ENCODE measurements at regions of chr2 and their contacts with region 1.

Region 1: DNA sequence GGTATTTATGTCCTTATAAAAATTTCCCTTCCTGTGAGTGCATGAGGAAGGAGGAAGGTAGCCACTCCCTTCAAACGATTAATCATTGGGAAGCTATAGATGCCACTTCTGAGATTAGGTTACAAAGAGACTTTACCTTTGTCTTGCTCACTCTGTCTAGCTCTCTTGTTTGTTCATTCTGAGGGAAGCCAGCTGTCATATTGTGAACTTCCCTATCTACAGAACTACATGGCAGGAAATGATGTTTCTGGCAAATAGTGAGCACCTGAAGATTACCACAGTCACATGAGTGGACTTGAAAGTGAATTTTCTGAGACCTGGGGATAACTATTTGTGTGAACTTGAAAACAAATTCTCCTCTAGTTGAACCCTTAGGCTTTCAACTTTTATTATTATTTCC is 776.8 kb downstream of the CCDC85A start:
- DNase-seq: no peak
- ATAC-seq: no peak
- H3K4me3 ChIP-seq: no peak overlapping the region
- H3K27ac ChIP-seq: no peak overlapping the region
- H3K4me1 ChIP-seq: no peaks in the 10 kb centered on the region
- H3K27me3 ChIP-seq: no peaks in the 10 kb centered on the region
- CTCF ChIP-seq: no peak

Region 2: GRCh38 chr2:57080035-57080434 is 119.5 kb after region 1 on chr2:
- CTCF ChIA-PET with region 1: no interaction called
- POLR2A ChIA-PET with region 1: no interaction called
- in situ Hi-C with region 1: no loop called
- intact Hi-C with region 1: no loop called
- DNase-seq: peak; percentile 10
- ATAC-seq: no peak
- H3K4me3 ChIP-seq: no peak overlapping the region
- H3K27ac ChIP-seq: no peak overlapping the region
- H3K4me1 ChIP-seq: no peaks in the 10 kb centered on the region
- H3K27me3 ChIP-seq: no peaks in the 10 kb centered on the region
- CTCF ChIP-seq: no peak

Region 3: GRCh38 chr2:57759822-57760300 is 799.3 kb after region 1 on chr2:
- CTCF ChIA-PET with region 1: no interaction called
- POLR2A ChIA-PET with region 1: interaction called, 15 read pairs
- in situ Hi-C with region 1: no loop called
- intact Hi-C with region 1: no loop called
- DNase-seq: peak; percentile 43
- ATAC-seq: peak; percentile 100
- H3K4me3 ChIP-seq: peak overlapping the region; percentile 20 to 59
- H3K27ac ChIP-seq: peak overlapping the region; percentile 62
- H3K4me1 ChIP-seq: peaks cover 9% of the 10 kb centered on the region; the same call in 1 of the 2 replicates
- H3K27me3 ChIP-seq: no peaks in the 10 kb centered on the region
- CTCF ChIP-seq: peak; percentile 92